Left lung (tissue), 14 donors: ENCODE measurements at regions of chr15 and their contacts with region 1.

Region 1: GRCh38 chr15:57751177-57751800 is 44.8 kb downstream of the POLR2M start:
- DNase-seq: peak in 1 of 4 donors; percentile 51
- ATAC-seq: peak; percentile 35
- H3K4me3 ChIP-seq: no peak overlapping the region
- H3K27ac ChIP-seq: no peak overlapping the region
- H3K4me1 ChIP-seq: peaks cover 0 to 4% of the 10 kb centered on the region in 2 donors
- H3K27me3 ChIP-seq: no peaks in the 10 kb centered on the region
- CTCF ChIP-seq: peak in 1 of 2 donors; percentile 35

Region 2: DNA sequence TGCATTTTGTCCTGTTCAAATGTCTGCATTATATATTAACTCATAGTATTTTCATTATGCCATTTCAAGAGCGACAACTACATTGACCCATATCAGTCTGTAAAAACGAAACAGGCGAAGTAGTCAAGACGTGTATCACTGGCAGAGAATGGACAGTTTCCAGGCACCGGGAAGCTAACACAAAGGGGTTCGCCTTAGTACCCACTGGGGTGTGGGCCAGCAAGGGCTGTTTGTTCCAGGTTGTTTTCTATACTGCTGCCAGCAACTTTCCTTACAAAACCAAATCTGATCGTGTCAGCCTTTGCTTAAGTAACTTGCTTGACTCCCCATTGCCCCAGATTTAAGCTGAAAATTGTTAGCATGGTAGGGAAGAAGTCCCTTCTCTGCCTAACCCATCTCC is 287.9 kb before region 1 on chr15:
- intact Hi-C with region 1: no loop called
- DNase-seq: no peak
- ATAC-seq: no peak
- H3K4me3 ChIP-seq: no peak overlapping the region
- H3K27ac ChIP-seq: no peak overlapping the region
- H3K4me1 ChIP-seq: peaks cover 2 to 3% of the 10 kb centered on the region in 2 donors
- H3K27me3 ChIP-seq: no peaks in the 10 kb centered on the region
- CTCF ChIP-seq: no peak

Region 3: GRCh38 chr15:57654153-57654852 is 97.0 kb before region 1 on chr15:
- intact Hi-C with region 1: no loop called
- DNase-seq: peak in 2 of 4 donors; percentile 67 to 75
- ATAC-seq: peak; percentile 21
- H3K4me3 ChIP-seq: no peak overlapping the region
- H3K27ac ChIP-seq: no peak overlapping the region
- H3K4me1 ChIP-seq: peaks cover 0 to 3% of the 10 kb centered on the region in 2 donors
- H3K27me3 ChIP-seq: no peaks in the 10 kb centered on the region
- CTCF ChIP-seq: no peak

Region 4: DNA sequence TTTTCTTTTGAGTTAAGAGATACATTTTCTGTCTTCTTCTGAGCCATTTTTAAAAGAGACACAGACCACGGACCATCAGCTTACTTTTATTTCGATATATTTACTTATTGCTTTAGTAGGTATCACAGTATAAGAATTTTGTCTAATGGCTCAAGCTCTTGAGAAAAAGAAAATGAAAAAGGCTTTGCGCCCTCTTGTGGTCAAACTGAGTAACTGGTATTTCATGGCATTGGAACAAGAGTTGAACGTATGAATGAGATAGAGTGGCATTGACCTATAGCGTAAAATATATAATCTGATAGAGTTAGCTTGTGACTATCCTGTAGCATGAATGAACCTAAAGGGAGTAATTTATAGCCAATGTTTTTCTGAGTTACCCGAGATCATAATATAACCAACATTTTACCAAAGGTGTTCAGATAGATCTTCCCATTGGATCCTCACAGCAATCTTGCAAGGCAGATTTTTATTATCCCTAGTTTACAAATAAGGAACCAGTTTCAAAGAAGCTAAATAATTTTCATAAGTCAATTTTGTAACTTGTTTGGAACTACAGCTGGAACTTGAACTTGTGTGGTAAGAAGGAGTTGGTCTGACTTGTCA is 109.8 kb after region 1 on chr15:
- intact Hi-C with region 1: loop called in 1 of 2 experiments (anchors 5 kb)
- DNase-seq: peak in 2 of 4 donors; percentile 42 to 67
- ATAC-seq: peak; percentile 77
- H3K4me3 ChIP-seq: no peak overlapping the region
- H3K27ac ChIP-seq: no peak overlapping the region
- H3K4me1 ChIP-seq: no peaks in the 10 kb centered on the region
- H3K27me3 ChIP-seq: no peaks in the 10 kb centered on the region
- CTCF ChIP-seq: peak; percentile 75 to 84

Region 5: DNA sequence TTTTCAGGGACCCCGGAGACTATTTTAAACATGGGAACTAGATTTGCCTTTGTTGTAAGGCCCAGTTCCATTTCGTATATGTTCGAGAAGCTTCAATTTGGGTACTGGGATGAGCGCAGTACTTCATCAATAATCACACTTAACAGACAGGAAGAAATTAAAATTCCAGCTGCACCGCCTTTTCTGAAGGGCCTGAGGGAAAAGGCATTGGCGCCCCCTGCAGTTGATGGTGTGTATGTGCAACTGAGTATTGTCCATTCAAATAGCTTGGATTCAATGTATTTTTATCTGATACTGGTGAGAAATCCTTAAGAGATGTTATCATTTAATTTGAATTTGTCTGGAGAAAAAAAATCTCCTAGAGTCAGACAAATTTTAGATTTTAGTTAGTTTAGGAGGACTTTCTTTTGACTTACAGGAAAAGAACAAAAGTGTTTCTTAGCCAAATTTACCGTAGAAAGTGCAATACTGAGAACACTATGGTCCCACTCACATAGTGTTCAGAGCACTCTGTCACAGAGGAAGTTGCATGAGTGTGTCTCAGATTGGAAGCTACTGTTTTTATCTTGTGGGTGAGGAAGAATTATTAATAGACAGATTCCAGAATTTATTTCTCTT is 319.6 kb after region 1 on chr15:
- intact Hi-C with region 1: loop called in 1 of 2 experiments (anchors 10 kb)
- DNase-seq: peak in 3 of 4 donors; percentile 47 to 75 (median 73)
- ATAC-seq: peak; percentile 74
- H3K4me3 ChIP-seq: no peak overlapping the region
- H3K27ac ChIP-seq: no peak overlapping the region
- H3K4me1 ChIP-seq: peaks cover 3 to 8% of the 10 kb centered on the region in 2 donors
- H3K27me3 ChIP-seq: peaks cover 17 to 63% of the 10 kb centered on the region in 2 donors
- CTCF ChIP-seq: peak; percentile 80 to 82